Posterior vena cava (tissue), 2 donors: ENCODE measurements at regions of chr19 and their contacts with region 1.

Region 1: GRCh38 chr19:17075035-17075863 is at the starts of genes HAUS8 and MYO9B:
- DNase-seq: peak; percentile 100
- total RNA-seq, gene HAUS8: 4.2 to 4.8 TPM
- total RNA-seq, gene MYO9B: 103 to 106 TPM

Region 2: DNA sequence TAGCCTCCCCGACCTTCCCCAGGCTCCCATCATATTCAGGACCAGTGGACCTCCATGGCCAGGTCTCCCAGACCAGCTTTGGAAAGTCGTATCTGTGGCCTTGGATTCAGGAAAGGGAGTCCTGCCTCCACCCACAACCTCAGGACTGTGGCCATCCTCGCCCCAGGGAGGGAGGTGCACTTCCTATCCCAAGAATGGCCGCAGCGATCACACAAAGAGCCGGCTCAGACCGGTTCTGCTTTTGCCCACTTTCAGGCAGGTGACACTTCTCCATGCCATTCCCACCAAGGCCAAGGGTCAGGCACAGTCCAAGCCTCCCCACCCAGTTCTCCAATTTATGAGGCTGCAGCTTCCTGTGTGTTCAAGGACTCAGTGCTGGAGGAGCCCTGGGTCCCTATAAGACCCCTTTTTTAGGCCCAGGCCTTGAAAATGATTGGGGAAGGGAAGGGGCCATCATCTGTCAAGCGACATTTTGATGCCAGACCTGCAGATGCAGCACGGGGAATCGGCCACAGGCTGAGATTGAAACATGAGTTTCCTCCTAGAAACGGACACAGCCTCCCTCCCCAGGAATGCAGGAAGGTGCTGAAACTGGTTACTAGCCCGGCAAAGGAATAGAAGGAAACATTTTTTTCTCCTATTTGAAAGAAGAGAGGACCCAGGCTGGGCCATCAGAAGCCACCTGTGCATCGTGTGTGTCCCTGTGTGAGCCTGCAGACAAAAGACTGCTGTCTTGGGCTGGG is 74.3 kb after region 1 on chr19:
- intact Hi-C with region 1: loop called (anchors 5 to 10 kb)
- DNase-seq: no peak

Region 3: DNA sequence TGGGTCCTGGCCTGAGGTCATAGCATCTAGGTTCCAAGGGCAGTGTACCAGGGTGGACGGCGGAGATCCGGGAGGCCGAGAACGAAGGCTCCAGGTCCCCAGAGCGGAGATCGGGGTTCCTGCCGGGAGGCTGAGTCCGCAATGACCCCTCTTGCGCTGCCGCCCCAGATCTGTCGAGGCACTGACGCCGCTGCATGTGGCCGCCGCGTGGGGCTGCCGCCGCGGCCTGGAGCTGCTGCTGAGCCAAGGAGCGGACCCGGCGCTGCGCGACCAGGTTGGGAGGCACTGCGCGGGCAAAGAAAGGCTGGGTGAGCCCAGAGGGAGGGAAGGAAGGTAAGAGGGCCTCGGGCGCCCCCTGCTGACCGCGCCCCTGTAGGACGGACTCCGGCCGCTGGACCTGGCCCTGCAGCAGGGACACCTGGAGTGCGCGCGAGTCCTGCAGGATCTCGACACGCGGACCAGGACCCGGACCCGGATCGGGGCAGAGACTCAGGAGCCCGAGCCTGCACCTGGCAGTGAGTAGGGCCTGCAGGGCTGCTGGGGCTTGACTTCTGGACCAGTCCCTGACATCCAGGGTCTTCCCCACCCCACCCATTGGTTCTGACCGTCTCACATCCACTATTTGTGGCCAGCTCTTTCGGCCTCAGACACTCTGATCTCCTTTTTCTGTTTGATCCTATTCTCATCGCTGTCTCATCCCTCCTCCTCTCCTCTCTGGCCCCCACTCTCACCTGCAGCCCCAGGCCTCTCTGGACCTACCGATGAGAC is 207.4 kb after region 1 on chr19:
- intact Hi-C with region 1: loop called (anchors 5 kb)
- DNase-seq: peak; percentile 95